ENCODE measurements at regions of chr10 and their contacts with region 1.

Region 1: DNA sequence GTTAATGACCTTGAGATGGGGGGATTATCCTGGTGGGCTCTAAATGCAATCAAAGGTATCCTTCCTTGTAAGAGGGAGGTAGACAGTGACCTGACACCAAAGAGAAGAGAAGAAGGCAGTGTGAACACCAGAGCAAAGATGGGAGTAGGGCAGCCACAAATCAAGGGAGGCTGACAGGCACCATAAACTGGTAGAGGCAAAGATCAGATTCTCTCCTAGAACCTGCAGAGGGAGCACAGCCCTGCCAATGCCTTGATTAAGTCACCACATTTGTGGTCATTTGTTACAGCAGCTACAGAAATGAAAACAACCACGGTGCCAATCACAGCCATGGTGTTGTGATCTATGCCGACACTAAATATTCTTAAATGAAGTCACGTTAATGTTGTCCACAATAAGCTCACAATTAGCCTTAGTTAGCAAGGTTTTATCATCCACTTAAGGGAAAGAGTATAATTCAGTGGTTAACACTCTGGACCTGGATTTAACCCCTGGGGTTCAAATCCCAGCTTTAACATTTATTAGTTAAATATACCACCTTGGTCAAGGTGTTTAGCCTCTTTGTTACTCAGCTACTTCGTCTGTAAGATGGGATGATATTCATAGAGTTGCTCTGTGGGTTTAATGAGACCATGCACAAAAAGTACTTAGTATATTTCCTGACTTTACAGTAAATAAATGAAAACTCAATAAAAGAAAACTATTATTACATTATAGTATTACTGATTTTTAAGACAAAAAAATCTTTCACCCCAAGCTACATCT is 70.8 kb downstream of the SGMS1 start:
- DNase-seq: no peak
- H3K4me3 ChIP-seq: no peak overlapping the region
- H3K27ac ChIP-seq: peak overlapping the region; percentile 50 to 73 (median 66)
- H3K4me1 ChIP-seq: peaks cover 63 to 85% (median 73%) of the 10 kb centered on the region in 4 donors
- H3K27me3 ChIP-seq: no peaks in the 10 kb centered on the region
- CTCF ChIP-seq: peak in 2 of 3 experiments; percentile 18 to 21
- EP300 ChIP-seq: no peak
- POLR2A ChIP-seq: no peak

Region 2: GRCh38 chr10:50512743-50513416 is 40.1 kb before region 1 on chr10:
- intact Hi-C with region 1: no loop called
- DNase-seq: no peak
- H3K4me3 ChIP-seq: no peak overlapping the region
- H3K27ac ChIP-seq: peak overlapping the region in 2 of 4 donors; percentile 1 to 37
- H3K4me1 ChIP-seq: peaks cover 33 to 68% (median 55%) of the 10 kb centered on the region in 4 donors
- H3K27me3 ChIP-seq: no peaks in the 10 kb centered on the region
- CTCF ChIP-seq: no peak
- EP300 ChIP-seq: no peak
- POLR2A ChIP-seq: no peak

Region 3: DNA sequence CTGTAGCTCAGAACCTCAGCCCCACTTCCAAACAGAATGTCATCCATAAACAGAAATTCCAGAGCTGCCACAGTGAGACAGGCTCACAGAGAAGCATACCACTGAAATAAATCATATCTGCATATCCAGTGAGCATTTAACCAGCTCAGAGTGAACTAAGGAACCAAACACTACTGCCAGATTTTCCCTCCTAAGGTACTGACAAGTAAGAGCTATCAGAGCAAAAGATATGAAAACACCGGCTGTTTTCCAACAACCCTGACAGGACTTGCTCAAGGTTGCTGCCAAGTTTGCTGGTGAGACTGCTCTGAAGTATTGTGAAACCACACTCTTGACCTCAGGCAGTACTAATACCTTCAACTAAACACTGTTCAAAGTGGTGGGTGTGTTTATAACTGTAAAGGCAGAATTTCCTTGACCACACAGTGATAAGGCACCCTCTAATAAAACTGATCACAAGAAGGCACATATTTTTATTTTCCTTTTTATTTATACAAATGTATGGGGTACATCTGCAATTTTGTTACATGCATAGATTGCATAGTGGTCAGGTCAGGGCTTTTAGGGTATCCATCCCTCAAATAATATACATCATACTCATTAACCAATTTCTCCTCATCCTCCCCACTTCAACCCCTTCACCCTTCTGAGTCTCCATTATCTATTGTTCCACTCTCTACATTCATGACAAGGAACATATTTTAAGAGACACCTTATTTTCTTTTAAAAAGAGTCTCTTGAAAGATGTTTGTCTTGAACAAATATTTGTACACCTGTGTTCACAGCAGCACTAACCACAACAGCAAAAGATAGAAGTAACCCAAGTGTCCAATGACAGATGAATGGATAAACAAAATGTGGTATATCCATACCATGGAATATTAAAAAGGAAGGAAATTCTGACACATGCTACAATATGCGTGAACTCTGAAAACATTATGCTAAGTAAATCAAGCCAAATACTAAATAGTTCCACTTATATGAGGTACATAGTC is 52.6 kb after region 1 on chr10:
- intact Hi-C with region 1: loop called (anchors 5 kb)
- DNase-seq: no peak
- H3K4me3 ChIP-seq: peak overlapping the region in 1 of 4 donors; percentile 19
- H3K27ac ChIP-seq: peak overlapping the region; percentile 33 to 78 (median 57)
- H3K4me1 ChIP-seq: peaks cover 55 to 94% (median 83%) of the 10 kb centered on the region in 4 donors
- H3K27me3 ChIP-seq: no peaks in the 10 kb centered on the region
- CTCF ChIP-seq: no peak
- EP300 ChIP-seq: no peak
- POLR2A ChIP-seq: no peak

Region 4: GRCh38 chr10:50624866-50625692 is 72.1 kb after region 1 on chr10:
- intact Hi-C with region 1: loop called (anchors 2 kb)
- DNase-seq: peak; percentile 93
- H3K4me3 ChIP-seq: peak overlapping the region; percentile 74 to 89 (median 84)
- H3K27ac ChIP-seq: peak overlapping the region; percentile 96 to 98 (median 98)
- H3K4me1 ChIP-seq: peaks cover 21 to 36% (median 31%) of the 10 kb centered on the region in 4 donors
- H3K27me3 ChIP-seq: no peaks in the 10 kb centered on the region
- CTCF ChIP-seq: peak; percentile 60 to 68 (median 61)
- EP300 ChIP-seq: no peak
- POLR2A ChIP-seq: no peak

Region 5: GRCh38 chr10:50909334-50910014 is 356.5 kb after region 1 on chr10:
- intact Hi-C with region 1: no loop called
- DNase-seq: no peak
- H3K4me3 ChIP-seq: no peak overlapping the region
- H3K27ac ChIP-seq: no peak overlapping the region
- H3K4me1 ChIP-seq: peaks cover 0 to 3% (median 0%) of the 10 kb centered on the region in 4 donors
- H3K27me3 ChIP-seq: no peaks in the 10 kb centered on the region
- CTCF ChIP-seq: no peak
- EP300 ChIP-seq: no peak
- POLR2A ChIP-seq: no peak

Measured in esophagus muscularis mucosa (tissue), 4 donors.